CD14-positive monocyte (primary cell): ENCODE measurements at regions of chr12 and their contacts with region 1.

Region 1: DNA sequence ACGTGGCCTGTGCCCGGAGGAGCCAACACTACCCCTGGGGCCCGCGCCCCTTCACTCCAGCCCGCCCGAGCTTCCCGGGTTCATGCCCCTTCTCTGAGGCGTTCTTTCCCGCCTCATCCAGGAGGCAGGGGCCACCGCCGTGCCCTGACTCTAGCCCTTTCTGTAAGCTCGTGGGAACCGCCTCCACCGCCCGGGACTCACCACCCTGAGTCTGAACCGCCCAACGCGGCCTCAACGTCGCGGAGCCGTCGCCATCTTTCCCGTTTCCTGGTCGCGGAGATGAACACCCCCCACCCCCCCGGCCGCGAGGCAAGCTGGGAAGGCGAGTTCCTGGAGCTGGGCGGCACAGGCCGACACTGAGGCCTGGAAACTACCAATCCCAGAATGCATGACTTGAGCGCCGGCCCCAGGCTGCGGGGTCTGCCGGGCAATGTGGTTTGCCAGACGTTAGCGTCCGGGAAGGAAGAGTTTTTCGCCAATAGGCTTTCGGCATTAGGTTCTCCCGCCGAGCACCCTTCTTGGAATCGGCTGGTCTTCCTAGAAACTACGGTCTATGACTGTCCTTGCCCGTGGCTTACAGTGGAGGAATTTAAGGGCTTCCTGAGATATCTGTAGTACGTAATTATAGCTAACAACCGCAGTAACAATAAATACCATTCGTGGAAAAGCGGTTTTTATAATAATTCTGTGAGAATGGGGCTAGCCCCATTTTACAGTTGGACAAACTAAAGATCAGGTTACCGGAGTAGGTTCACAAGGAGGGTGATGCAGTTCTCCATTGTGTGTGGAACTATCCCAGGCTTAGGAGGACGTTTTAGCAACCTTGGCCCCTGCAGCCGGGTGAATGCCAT is at the start of gene DDX23:
- DNase-seq: peak; percentile 92 to 95 (median 93)
- H3K4me3 ChIP-seq: peak within 1 kb of the TSS; percentile 75 to 98 (median 97)
- H3K4me3 Mint-ChIP-seq: peak within 1 kb of the TSS; percentile 92 to 98
- H3K27ac ChIP-seq: peak within 1 kb of the TSS; percentile 76 to 92
- H3K27ac Mint-ChIP-seq: peak within 1 kb of the TSS; percentile 88 to 98 (median 93)
- H3K4me1 ChIP-seq: peaks cover 17 to 27% of the 10 kb centered on the region in 2 donors
- H3K4me1 Mint-ChIP-seq: peaks cover 23% of the 10 kb centered on the region
- H3K27me3 ChIP-seq: no peaks in the 10 kb centered on the region
- H3K27me3 Mint-ChIP-seq: peaks cover 0 to 5% (median 4%) of the 10 kb centered on the region in 3 donors
- CTCF ChIP-seq: no peak
- polyA plus RNA-seq, gene DDX23: 21.4 to 63.8 (median 28.4) TPM

Region 2: GRCh38 chr12:48873096-48873495 is 21.0 kb after region 1 on chr12:
- intact Hi-C with region 1: no loop called
- DNase-seq: no peak
- H3K4me3 ChIP-seq: no peak overlapping the region
- H3K4me3 Mint-ChIP-seq: no peak overlapping the region
- H3K27ac ChIP-seq: no peak overlapping the region
- H3K27ac Mint-ChIP-seq: no peak overlapping the region
- H3K4me1 ChIP-seq: no peaks in the 10 kb centered on the region
- H3K4me1 Mint-ChIP-seq: no peaks in the 10 kb centered on the region
- H3K27me3 ChIP-seq: no peaks in the 10 kb centered on the region
- H3K27me3 Mint-ChIP-seq: peaks cover 9% of the 10 kb centered on the region in 3 donors
- CTCF ChIP-seq: no peak

Region 3: GRCh38 chr12:48890657-48891418 is 38.7 kb after region 1 on chr12:
- intact Hi-C with region 1: loop called (anchors 1 to 2 kb)
- DNase-seq: peak; percentile 41 to 64 (median 53)
- H3K4me3 ChIP-seq: no peak overlapping the region
- H3K4me3 Mint-ChIP-seq: peak overlapping the region in 1 of 2 donors; percentile 60
- H3K27ac ChIP-seq: no peak overlapping the region
- H3K27ac Mint-ChIP-seq: no peak overlapping the region
- H3K4me1 ChIP-seq: peaks cover 6 to 7% of the 10 kb centered on the region in 2 donors
- H3K4me1 Mint-ChIP-seq: peaks cover 6% of the 10 kb centered on the region
- H3K27me3 ChIP-seq: peaks cover 7 to 20% of the 10 kb centered on the region in 2 donors
- H3K27me3 Mint-ChIP-seq: peaks cover 24 to 40% (median 29%) of the 10 kb centered on the region in 3 donors
- CTCF ChIP-seq: peak; percentile 91

Region 4: DNA sequence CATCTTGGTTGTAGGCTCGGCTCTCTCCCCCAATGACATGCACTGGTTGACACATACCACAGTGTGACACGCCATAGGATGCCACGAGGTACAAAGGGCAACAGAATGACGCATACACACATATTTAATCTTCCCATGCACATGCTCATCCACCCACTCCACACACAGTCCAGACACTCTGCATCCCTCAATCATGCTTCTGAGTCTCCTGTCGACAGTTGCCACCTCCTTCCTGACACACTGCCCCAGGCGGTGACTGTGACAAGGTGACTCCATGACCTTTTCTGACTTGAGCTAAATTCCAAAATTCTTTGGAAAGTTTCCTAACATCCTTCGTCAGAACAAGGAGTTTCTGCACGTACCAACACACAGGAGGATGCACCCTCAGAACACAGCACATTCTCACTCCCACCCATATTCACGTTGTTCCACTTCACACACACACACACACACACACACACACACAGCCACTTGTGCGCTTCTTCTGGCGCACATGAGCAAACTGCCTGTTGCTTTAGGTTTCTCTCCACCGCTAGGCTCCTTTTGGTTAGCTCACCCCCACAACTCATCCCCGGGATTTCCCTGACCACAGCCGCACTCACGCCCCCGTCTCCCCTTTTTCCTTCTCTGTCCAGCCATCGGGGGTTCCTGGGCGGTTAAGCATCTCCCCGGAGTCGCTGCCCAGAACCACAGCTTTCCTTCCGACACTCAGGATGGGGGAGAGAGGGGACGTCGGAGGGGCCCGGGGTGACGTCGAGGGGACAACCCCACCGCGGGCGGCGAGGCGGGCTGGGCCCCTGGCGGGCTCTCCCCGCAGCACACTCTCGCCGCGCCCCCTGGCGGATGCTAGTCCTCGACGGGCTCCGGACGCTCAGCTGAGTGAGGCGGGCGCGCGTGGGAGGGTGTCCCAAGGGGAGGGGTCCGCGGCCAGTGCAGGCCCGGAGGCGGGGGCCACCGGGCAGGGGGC is 125.5 kb after region 1 on chr12:
- intact Hi-C with region 1: loop called (anchors 10 kb)
- DNase-seq: peak in 2 of 3 donors; percentile 69 to 80
- H3K4me3 ChIP-seq: peak overlapping the region in 1 of 3 experiments; percentile 72
- H3K4me3 Mint-ChIP-seq: peak overlapping the region; percentile 37 to 86
- H3K27ac ChIP-seq: no peak overlapping the region
- H3K27ac Mint-ChIP-seq: peak overlapping the region in 5 of 7 donors; percentile 47 to 83 (median 73)
- H3K4me1 ChIP-seq: peaks cover 56 to 59% of the 10 kb centered on the region in 2 donors
- H3K4me1 Mint-ChIP-seq: peaks cover 62% of the 10 kb centered on the region
- H3K27me3 ChIP-seq: peaks cover 67 to 96% of the 10 kb centered on the region in 2 donors
- H3K27me3 Mint-ChIP-seq: peaks cover 90 to 99% (median 95%) of the 10 kb centered on the region in 3 donors
- CTCF ChIP-seq: peak; percentile 99

Region 5: DNA sequence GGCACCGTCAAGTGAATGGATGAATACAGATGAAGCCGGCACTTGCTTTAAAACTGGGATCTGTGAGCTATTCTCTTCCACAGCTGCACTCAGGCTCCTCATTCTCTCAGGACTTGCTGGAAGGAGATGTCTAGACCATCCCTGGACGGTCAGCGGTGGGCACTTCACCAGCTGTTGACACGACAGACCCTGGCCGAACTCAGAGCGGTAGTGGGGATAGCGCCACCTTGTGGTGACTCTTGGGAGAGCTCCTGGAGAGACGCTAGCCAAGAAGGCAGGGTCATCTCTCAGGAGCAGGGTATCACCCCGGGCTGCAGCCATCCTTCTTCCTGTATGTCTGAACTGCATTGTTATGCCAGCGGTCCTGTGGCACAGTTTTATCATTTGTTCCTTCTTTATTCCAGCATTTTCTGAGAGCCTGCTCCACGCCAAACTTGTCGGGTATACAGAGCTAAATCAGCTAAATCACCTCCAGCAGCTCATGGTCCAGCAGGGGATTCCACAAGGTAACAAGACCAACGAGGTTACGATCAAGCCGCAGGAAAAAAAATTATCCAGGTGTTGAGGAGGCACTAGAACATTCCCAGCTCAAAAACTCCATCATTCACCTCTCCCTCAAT is 136.0 kb after region 1 on chr12:
- intact Hi-C with region 1: loop called in 1 of 2 experiments (anchors 10 kb)
- DNase-seq: peak in 2 of 3 donors; percentile 69 to 70
- H3K4me3 ChIP-seq: no peak overlapping the region
- H3K4me3 Mint-ChIP-seq: peak overlapping the region in 1 of 2 donors; percentile 64
- H3K27ac ChIP-seq: no peak overlapping the region
- H3K27ac Mint-ChIP-seq: peak overlapping the region in 1 of 7 donors; percentile 49
- H3K4me1 ChIP-seq: no peaks in the 10 kb centered on the region
- H3K4me1 Mint-ChIP-seq: peaks cover 4% of the 10 kb centered on the region
- H3K27me3 ChIP-seq: peaks cover 39 to 78% of the 10 kb centered on the region in 2 donors
- H3K27me3 Mint-ChIP-seq: peaks cover 66 to 92% (median 79%) of the 10 kb centered on the region in 3 donors
- CTCF ChIP-seq: peak; percentile 97

Region 6: GRCh38 chr12:49130151-49131050 is 278.3 kb after region 1 on chr12:
- intact Hi-C with region 1: no loop called
- DNase-seq: peak; percentile 94 to 96 (median 96)
- H3K4me3 ChIP-seq: peak overlapping the region; percentile 84 to 99 (median 98)
- H3K4me3 Mint-ChIP-seq: peak overlapping the region; percentile 94 to 97
- H3K27ac ChIP-seq: peak overlapping the region; percentile 94 to 97
- H3K27ac Mint-ChIP-seq: peak overlapping the region; percentile 94 to 96 (median 96)
- H3K4me1 ChIP-seq: peaks cover 27 to 43% of the 10 kb centered on the region in 2 donors
- H3K4me1 Mint-ChIP-seq: peaks cover 38% of the 10 kb centered on the region
- H3K27me3 ChIP-seq: no peaks in the 10 kb centered on the region
- H3K27me3 Mint-ChIP-seq: no peaks in the 10 kb centered on the region
- CTCF ChIP-seq: peak; percentile 98